Caco-2 (cell line): ENCODE measurements at regions of chrX and their contacts with region 1.

Region 1: DNA sequence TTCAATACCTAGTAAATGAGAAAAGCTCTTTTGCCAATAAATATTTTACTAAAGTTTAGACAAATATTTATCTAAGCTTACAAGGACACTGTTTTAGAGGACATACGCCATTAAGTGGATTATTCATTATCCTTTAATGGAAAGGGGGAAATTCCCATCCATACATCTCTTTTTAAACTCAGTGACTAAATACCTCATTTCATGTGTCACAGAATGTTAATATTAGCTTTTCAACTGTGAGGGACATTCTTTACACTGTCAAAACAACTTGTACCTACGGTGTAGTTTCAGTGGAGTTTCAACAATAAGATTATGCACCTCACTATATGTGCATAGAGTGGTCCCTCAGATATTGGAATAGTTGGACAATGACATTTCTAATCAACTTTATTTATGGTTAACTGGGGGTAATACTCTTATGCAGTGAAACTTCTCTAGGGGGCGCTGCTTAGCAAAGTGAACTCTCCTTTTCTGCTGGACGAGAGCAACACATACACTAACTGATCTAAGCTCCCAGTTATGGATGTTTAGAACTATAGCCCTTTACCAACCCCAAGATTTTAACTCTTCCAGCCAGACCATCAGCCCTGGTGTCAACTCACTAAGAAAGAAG is 9.7 kb downstream of the HS6ST2 start:
- DNase-seq: peak in 1 of 2 experiments; percentile 29
- H3K4me3 ChIP-seq: no peak overlapping the region
- H3K4me3 Mint-ChIP-seq: no peak overlapping the region
- H3K27ac Mint-ChIP-seq: no peak overlapping the region
- H3K4me1 ChIP-seq: peaks cover 11% of the 10 kb centered on the region
- H3K4me1 Mint-ChIP-seq: peaks cover 15% of the 10 kb centered on the region
- H3K27me3 ChIP-seq: no peaks in the 10 kb centered on the region
- H3K27me3 Mint-ChIP-seq: no peaks in the 10 kb centered on the region
- CTCF ChIP-seq: peak; percentile 26 to 47

Region 2: DNA sequence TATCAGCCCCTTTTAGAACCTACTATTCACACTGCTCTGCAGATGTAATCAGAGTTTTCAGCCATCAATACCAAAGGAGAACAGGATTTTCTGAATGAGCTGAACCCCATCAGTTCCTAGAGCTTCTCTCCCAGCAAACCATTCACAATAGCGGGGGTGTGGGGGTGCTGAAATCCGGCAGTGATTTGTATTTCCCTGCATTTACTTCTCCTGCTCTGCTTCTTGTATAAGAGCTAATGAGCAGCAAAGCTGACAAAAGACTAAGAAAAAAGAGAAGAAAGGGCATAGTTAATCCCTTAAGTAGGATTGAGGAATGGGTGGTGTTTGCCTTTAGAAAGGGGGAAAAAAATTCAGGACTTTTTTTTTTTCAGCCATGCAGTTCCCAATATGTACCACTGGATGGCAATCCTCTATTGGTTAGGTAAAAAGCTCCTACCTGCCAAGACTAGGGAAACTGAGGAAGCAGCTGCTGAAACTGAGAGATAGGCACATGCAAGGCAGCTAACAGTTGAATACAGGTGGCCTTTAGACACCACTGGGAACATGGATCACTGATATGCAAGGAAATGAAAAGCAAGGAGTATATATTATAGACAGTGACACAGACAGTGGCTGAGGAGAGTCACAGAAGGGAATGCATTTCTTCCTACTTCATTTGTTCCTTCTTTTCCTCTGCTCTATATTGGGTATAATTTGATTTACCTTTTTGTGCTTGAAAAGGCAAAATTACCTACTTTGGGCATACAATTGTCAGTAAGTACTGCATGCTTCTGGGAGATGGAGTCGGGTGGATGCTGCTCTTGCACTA is 208.2 kb before region 1 on chrX:
- CTCF ChIA-PET with region 1: no interaction called
- POLR2A ChIA-PET with region 1: no interaction called
- intact Hi-C with region 1: loop called (anchors 2 kb)
- DNase-seq: peak in 1 of 2 experiments; percentile 8
- H3K4me3 ChIP-seq: no peak overlapping the region
- H3K4me3 Mint-ChIP-seq: no peak overlapping the region
- H3K27ac Mint-ChIP-seq: no peak overlapping the region
- H3K4me1 ChIP-seq: no peaks in the 10 kb centered on the region
- H3K4me1 Mint-ChIP-seq: peaks cover 6% of the 10 kb centered on the region
- H3K27me3 ChIP-seq: no peaks in the 10 kb centered on the region
- H3K27me3 Mint-ChIP-seq: no peaks in the 10 kb centered on the region
- CTCF ChIP-seq: peak; percentile 61 to 66

Region 3: DNA sequence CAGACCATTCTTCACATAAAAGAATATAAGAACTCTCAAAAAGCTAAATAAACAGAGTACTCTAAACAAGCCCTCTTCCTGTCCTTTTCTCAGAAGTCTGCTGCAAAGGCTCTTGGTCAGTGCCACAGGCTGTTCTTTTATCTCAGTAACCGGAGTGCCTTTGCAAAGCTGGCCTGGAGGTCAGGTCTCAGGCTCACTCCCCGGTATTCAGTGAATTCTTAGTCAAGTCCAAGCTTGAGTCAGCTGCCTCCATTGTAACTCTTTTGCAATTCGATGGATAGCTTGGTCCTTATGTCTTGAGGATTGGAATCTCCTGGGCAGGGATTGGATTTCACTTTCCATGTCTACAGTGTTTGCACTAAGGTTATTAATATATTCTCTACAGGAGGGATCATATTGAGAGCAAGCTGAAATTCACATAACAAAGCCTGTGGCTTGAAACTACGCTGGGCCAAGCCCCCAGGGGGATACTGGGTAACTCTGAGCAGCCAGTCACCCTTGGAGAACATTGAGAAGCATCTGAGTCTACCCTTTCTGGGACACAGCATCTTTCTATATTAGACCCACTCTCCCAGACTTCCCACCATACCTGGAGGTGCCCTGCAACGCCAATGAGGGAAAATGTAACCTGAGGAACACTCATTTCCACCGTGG is 19.7 kb after region 1 on chrX:
- CTCF ChIA-PET with region 1: no interaction called
- POLR2A ChIA-PET with region 1: no interaction called
- intact Hi-C with region 1: no loop called
- DNase-seq: peak; percentile 17 to 35
- H3K4me3 ChIP-seq: no peak overlapping the region
- H3K4me3 Mint-ChIP-seq: no peak overlapping the region
- H3K27ac Mint-ChIP-seq: no peak overlapping the region
- H3K4me1 ChIP-seq: no peaks in the 10 kb centered on the region
- H3K4me1 Mint-ChIP-seq: no peaks in the 10 kb centered on the region
- H3K27me3 ChIP-seq: no peaks in the 10 kb centered on the region
- H3K27me3 Mint-ChIP-seq: no peaks in the 10 kb centered on the region
- CTCF ChIP-seq: no peak